MCF 10A (cell line): ENCODE measurements at regions of chr5 and their contacts with region 1.

Region 1: GRCh38 chr5:96601811-96602244 is 60.3 kb upstream of the CAST start:
- DNase-seq: peak; percentile 86
- H3K4me3 Mint-ChIP-seq: no peak overlapping the region
- H3K27ac Mint-ChIP-seq: no peak overlapping the region
- H3K4me1 Mint-ChIP-seq: peaks cover 6% of the 10 kb centered on the region
- H3K27me3 Mint-ChIP-seq: no peaks in the 10 kb centered on the region
- CTCF ChIP-seq: peak; percentile 65

Region 2: GRCh38 chr5:95646554-95647431 is 955.0 kb before region 1 on chr5 and contains the start of gene RFESD:
- CTCF ChIA-PET with region 1: interaction called, 6 read pairs
- POLR2A ChIA-PET with region 1: no interaction called
- intact Hi-C with region 1: loop called (anchors 1 kb)
- DNase-seq: peak; percentile 96
- H3K4me3 Mint-ChIP-seq: peak within 1 kb of the TSS; percentile 74
- H3K27ac Mint-ChIP-seq: peak within 1 kb of the TSS; percentile 89
- H3K4me1 Mint-ChIP-seq: peaks cover 15% of the 10 kb centered on the region
- H3K27me3 Mint-ChIP-seq: no peaks in the 10 kb centered on the region
- CTCF ChIP-seq: no peak
- total RNA-seq, gene RFESD: 4.2 and 5.9 TPM in 2 replicates

Region 3: GRCh38 chr5:96226941-96227552 is 374.8 kb before region 1 on chr5:
- CTCF ChIA-PET with region 1: no interaction called
- POLR2A ChIA-PET with region 1: no interaction called
- intact Hi-C with region 1: loop called (anchors 10 kb)
- DNase-seq: peak; percentile 77
- H3K4me3 Mint-ChIP-seq: peak overlapping the region; percentile 46
- H3K27ac Mint-ChIP-seq: peak overlapping the region; percentile 82
- H3K4me1 Mint-ChIP-seq: peaks cover 38% of the 10 kb centered on the region
- H3K27me3 Mint-ChIP-seq: no peaks in the 10 kb centered on the region
- CTCF ChIP-seq: no peak

Region 4: DNA sequence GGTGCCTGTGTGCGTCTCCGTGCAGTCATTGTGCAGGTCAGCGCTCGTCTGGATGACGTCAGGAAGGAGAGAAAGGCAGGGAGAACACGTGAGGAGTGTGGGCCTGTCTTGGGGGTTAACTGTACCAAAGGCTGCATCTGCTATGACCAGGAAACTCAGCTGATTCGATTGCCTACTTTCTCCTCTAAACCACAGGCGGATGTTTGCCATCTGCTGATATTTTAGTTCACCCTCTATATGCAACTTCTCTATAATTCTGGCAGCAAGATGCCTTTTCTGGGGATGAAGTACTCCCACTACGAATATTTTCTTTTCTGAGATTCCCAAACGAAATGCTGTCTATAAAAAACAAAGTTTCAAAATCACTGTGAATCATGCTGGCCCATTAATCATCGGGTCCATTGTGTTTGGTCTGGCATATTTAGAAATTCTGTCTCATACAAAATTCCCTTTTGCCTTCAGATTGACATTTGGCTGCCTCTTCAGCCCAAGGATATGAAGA is 193.5 kb before region 1 on chr5:
- CTCF ChIA-PET with region 1: interaction called, 11 read pairs
- POLR2A ChIA-PET with region 1: interaction called, 9 read pairs
- intact Hi-C with region 1: no loop called
- DNase-seq: peak; percentile 98
- H3K4me3 Mint-ChIP-seq: peak overlapping the region; percentile 61
- H3K27ac Mint-ChIP-seq: peak overlapping the region; percentile 98
- H3K4me1 Mint-ChIP-seq: peaks cover 22% of the 10 kb centered on the region
- H3K27me3 Mint-ChIP-seq: no peaks in the 10 kb centered on the region
- CTCF ChIP-seq: no peak

Region 5: GRCh38 chr5:96517295-96517694 is 84.5 kb before region 1 on chr5:
- CTCF ChIA-PET with region 1: interaction called, 13 read pairs
- POLR2A ChIA-PET with region 1: no interaction called
- intact Hi-C with region 1: loop called (anchors 10 kb)
- DNase-seq: no peak
- H3K4me3 Mint-ChIP-seq: no peak overlapping the region
- H3K27ac Mint-ChIP-seq: peak overlapping the region; percentile 10
- H3K4me1 Mint-ChIP-seq: peaks cover 14% of the 10 kb centered on the region
- H3K27me3 Mint-ChIP-seq: no peaks in the 10 kb centered on the region
- CTCF ChIP-seq: no peak

Region 6: GRCh38 chr5:96588539-96588938 is 13.3 kb before region 1 on chr5:
- CTCF ChIA-PET with region 1: interaction called, 32 read pairs
- POLR2A ChIA-PET with region 1: no interaction called
- intact Hi-C with region 1: no loop called
- DNase-seq: no peak
- H3K4me3 Mint-ChIP-seq: no peak overlapping the region
- H3K27ac Mint-ChIP-seq: no peak overlapping the region
- H3K4me1 Mint-ChIP-seq: peaks cover 9% of the 10 kb centered on the region
- H3K27me3 Mint-ChIP-seq: no peaks in the 10 kb centered on the region
- CTCF ChIP-seq: no peak

Region 7: GRCh38 chr5:96645091-96645490 is 43.3 kb after region 1 on chr5:
- CTCF ChIA-PET with region 1: no interaction called
- POLR2A ChIA-PET with region 1: no interaction called
- intact Hi-C with region 1: no loop called
- DNase-seq: no peak
- H3K4me3 Mint-ChIP-seq: no peak overlapping the region
- H3K27ac Mint-ChIP-seq: no peak overlapping the region
- H3K4me1 Mint-ChIP-seq: peaks cover 16% of the 10 kb centered on the region
- H3K27me3 Mint-ChIP-seq: no peaks in the 10 kb centered on the region
- CTCF ChIP-seq: no peak